T-cell (primary cell): ENCODE measurements at regions of chr5 and their contacts with region 1.

Region 1: DNA sequence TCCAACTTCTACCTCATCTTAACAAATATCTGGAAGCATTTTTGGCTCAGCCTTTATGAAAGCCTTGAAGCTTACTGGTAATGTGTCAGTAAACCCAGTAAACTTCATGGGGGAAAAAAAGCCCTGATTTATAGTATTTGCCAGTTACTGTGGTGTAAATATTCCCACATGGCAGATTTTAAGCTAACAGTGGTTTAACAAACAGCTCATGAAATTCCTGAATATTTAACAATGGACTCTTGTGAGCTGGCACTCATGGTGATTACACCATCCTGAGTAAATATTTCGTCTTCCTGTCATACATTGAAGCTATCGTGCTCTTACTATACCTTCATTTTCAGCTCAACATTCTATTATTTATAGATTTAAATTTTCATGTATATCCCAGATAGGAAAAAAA is 57.0 kb upstream of the ACOT12 start:
- DNase-seq: no peak
- ATAC-seq: no peak
- H3K4me3 ChIP-seq: no peak overlapping the region
- H3K4me3 Mint-ChIP-seq: no peak overlapping the region
- H3K27ac ChIP-seq: no peak overlapping the region
- H3K27ac Mint-ChIP-seq: no peak overlapping the region
- H3K4me1 ChIP-seq: no peaks in the 10 kb centered on the region
- H3K4me1 Mint-ChIP-seq: no peaks in the 10 kb centered on the region
- H3K27me3 ChIP-seq: no peaks in the 10 kb centered on the region
- H3K27me3 Mint-ChIP-seq: no peaks in the 10 kb centered on the region

Region 2: GRCh38 chr5:80754900-80755299 is 696.0 kb before region 1 on chr5:
- CTCF ChIA-PET with region 1: no interaction called
- POLR2A ChIA-PET with region 1: interaction called in 1 of 2 experiments, 11 read pairs
- DNase-seq: no peak
- ATAC-seq: peak in 2 of 4 experiments; percentile 15 to 28
- H3K4me3 ChIP-seq: no peak overlapping the region
- H3K4me3 Mint-ChIP-seq: peak overlapping the region; percentile 44 to 75 (median 63)
- H3K27ac ChIP-seq: peak overlapping the region; percentile 71
- H3K27ac Mint-ChIP-seq: peak overlapping the region; percentile 91 to 96
- H3K4me1 ChIP-seq: peaks cover 15 to 21% of the 10 kb centered on the region in 2 experiments
- H3K4me1 Mint-ChIP-seq: peaks cover 55 to 68% (median 58%) of the 10 kb centered on the region in 3 donors
- H3K27me3 ChIP-seq: no peaks in the 10 kb centered on the region
- H3K27me3 Mint-ChIP-seq: no peaks in the 10 kb centered on the region

Region 3: GRCh38 chr5:80975065-80975464 is 475.9 kb before region 1 on chr5:
- CTCF ChIA-PET with region 1: no interaction called
- POLR2A ChIA-PET with region 1: no interaction called
- DNase-seq: no peak
- ATAC-seq: no peak
- H3K4me3 ChIP-seq: no peak overlapping the region
- H3K4me3 Mint-ChIP-seq: peak overlapping the region in 1 of 3 donors; percentile 6
- H3K27ac ChIP-seq: no peak overlapping the region
- H3K27ac Mint-ChIP-seq: peak overlapping the region; percentile 46 to 79
- H3K4me1 ChIP-seq: peaks cover 20% of the 10 kb centered on the region in 2 experiments
- H3K4me1 Mint-ChIP-seq: peaks cover 82 to 87% (median 85%) of the 10 kb centered on the region in 3 donors
- H3K27me3 ChIP-seq: no peaks in the 10 kb centered on the region
- H3K27me3 Mint-ChIP-seq: no peaks in the 10 kb centered on the region